ENCODE measurements at regions of chr21 and their contacts with region 1.

Region 1: GRCh38 chr21:35159881-35160280 is 110.8 kb upstream of the RUNX1 start:
- DNase-seq: peak; percentile 74
- H3K4me3 ChIP-seq: no peak overlapping the region
- H3K27ac ChIP-seq: peak overlapping the region; percentile 75
- H3K4me1 ChIP-seq: peaks cover 37% of the 10 kb centered on the region
- H3K27me3 ChIP-seq: no peaks in the 10 kb centered on the region
- CTCF ChIP-seq: no peak

Region 2: DNA sequence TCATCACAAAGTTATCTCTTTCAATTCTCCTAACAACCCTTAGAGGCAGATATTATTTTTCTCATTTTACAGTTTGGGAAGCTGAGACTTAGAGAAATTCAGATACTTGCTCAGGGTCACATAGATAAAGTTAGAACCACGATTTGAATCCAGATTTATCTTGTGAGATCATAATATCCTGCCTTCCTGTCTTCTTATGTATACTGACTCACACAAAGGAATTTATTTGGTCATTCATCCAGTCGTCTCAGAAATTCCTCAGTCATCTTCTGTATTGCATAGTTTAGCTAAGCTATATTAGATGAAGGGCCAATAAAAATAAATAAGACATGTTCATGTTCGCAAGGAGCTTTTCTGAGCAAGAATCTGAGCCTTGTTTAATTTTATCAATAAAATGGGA is 75.0 kb before region 1 on chr21:
- CTCF ChIA-PET with region 1: no interaction called
- dilution Hi-C with region 1: no loop called
- in situ Hi-C with region 1: no loop called
- intact Hi-C with region 1: loop called (anchors 5 kb)
- DNase-seq: peak; percentile 76
- H3K4me3 ChIP-seq: no peak overlapping the region
- H3K27ac ChIP-seq: peak overlapping the region; percentile 81
- H3K4me1 ChIP-seq: peaks cover 34% of the 10 kb centered on the region
- H3K27me3 ChIP-seq: no peaks in the 10 kb centered on the region
- CTCF ChIP-seq: no peak

Measured in mammary epithelial cell (primary cell).